ENCODE measurements at regions of chr13 and their contacts with region 1.

Region 1: GRCh38 chr13:49443704-49444523 is at the starts of genes CAB39L and SETDB2:
- DNase-seq: peak; percentile 97 to 100 (median 99)
- ATAC-seq: peak; percentile 89
- H3K4me3 ChIP-seq: peak within 1 kb of the TSS; percentile 72 to 76
- H3K4me3 Mint-ChIP-seq: peak within 1 kb of the TSS; percentile 93
- H3K27ac ChIP-seq: peak within 1 kb of the TSS; percentile 91 to 93
- H3K27ac Mint-ChIP-seq: peak within 1 kb of the TSS; percentile 98
- H3K4me1 ChIP-seq: peaks cover 42% of the 10 kb centered on the region
- H3K4me1 Mint-ChIP-seq: peaks cover 51% of the 10 kb centered on the region
- H3K27me3 ChIP-seq: no peaks in the 10 kb centered on the region
- H3K27me3 Mint-ChIP-seq: peaks cover 2% of the 10 kb centered on the region
- CTCF ChIP-seq: no peak
- total RNA-seq, gene CAB39L: 1.6 to 2.1 TPM
- total RNA-seq, gene SETDB2: 8.4 to 9.3 TPM

Region 2: GRCh38 chr13:48303359-48304142 is 1140.4 kb before region 1 on chr13 and contains the start of gene RB1:
- CTCF ChIA-PET with region 1: no interaction called
- POLR2A ChIA-PET with region 1: no interaction called
- intact Hi-C with region 1: loop called in 1 of 2 experiments (anchors 5 kb)
- DNase-seq: peak; percentile 81 to 97 (median 90)
- ATAC-seq: peak; percentile 79
- H3K4me3 ChIP-seq: peak within 1 kb of the TSS; percentile 83 to 95
- H3K4me3 Mint-ChIP-seq: peak within 1 kb of the TSS; percentile 98
- H3K27ac ChIP-seq: peak within 1 kb of the TSS; percentile 97 to 99
- H3K27ac Mint-ChIP-seq: peak within 1 kb of the TSS; percentile 97
- H3K4me1 ChIP-seq: peaks cover 17% of the 10 kb centered on the region
- H3K4me1 Mint-ChIP-seq: peaks cover 39% of the 10 kb centered on the region
- H3K27me3 ChIP-seq: no peaks in the 10 kb centered on the region
- H3K27me3 Mint-ChIP-seq: no peaks in the 10 kb centered on the region
- CTCF ChIP-seq: no peak
- total RNA-seq, gene RB1: 11.5 to 12.5 TPM

Region 3: DNA sequence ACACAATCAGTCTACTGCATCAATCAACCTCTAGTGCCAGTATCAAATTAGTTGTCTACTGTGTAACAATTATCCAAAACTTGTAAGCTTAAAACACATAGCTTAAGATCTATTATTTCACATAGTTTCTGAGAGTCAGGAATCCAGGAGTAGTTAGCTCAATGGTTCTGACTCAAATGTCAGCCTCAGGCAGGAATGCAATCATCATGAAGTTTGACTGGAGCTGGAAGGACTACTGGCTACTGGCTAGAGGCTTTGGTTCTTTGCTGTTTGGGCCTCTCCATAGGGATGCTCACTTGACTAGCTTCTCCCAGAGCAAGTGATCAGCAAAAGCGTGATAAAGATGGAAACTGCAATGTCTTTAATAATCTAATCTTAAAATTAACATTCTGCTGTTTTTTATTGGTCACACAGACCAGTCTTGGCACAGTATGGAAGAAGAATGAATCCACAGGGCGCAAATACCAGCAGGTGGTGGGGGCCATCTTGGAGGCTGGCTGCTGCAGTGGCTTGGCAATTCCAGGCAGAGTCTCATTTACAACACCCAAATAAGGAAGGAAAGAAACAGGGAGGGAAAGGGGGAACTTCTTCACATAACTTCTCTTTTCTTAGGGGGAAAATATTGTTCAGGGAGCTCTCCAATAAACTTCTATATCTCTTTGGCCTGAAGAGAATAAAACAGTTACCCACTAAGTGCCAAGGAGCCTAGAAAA is 15.7 kb before region 1 on chr13:
- CTCF ChIA-PET with region 1: no interaction called
- POLR2A ChIA-PET with region 1: interaction called, 14 read pairs
- intact Hi-C with region 1: no loop called
- DNase-seq: no peak
- ATAC-seq: no peak
- H3K4me3 ChIP-seq: no peak overlapping the region
- H3K4me3 Mint-ChIP-seq: no peak overlapping the region
- H3K27ac ChIP-seq: no peak overlapping the region
- H3K27ac Mint-ChIP-seq: no peak overlapping the region
- H3K4me1 ChIP-seq: no peaks in the 10 kb centered on the region
- H3K4me1 Mint-ChIP-seq: no peaks in the 10 kb centered on the region
- H3K27me3 ChIP-seq: no peaks in the 10 kb centered on the region
- H3K27me3 Mint-ChIP-seq: no peaks in the 10 kb centered on the region
- CTCF ChIP-seq: no peak

Region 4: DNA sequence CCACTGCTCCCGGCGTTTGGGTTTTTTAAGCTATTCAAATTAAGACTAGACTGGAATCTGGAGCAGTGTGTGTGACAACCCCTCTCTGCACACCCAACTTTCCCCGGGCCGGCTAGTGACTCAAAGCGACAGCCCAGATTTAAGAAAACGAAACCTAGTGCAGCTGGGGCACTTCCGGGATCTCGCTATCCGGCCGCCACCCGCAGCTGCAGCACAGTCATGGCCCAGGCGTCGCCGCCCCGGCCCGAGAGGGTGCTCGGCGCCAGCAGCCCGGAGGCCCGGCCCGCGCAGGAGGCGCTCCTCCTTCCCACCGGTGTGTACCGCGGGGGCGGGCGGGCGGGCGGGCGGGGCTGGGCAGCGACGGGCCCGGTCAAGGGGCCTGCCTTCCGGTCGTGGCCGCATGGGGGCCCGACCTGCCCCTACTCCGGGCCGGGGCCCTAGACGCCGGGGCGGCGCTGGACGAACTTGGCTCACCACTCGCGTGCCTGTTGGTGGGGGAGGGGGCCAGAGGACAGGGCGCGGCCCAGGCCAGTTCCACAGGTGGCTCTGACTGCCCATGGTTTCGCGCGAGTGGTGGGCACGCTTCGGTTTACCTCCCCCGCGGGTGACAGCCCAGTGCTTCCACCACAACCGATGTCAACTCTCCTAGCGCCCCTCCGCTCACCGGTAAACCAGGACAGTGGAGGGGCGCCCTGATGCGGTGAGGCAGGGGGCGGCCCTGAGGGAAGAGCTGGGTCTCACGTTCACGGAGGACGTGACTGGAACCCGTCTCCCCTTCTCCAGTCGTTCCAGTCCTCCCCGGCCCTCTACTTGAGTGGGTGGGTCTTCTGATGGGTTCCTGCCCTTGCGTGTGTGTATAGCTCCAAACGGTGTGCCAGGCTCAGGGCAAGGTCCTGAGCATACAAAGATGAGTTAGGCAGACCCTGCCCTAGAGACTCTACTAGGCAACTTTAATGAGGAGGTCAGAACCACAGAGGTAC is 52.2 kb after region 1 on chr13 and contains the start of gene PHF11:
- CTCF ChIA-PET with region 1: interaction called, 5 read pairs
- POLR2A ChIA-PET with region 1: interaction called, 86 read pairs
- intact Hi-C with region 1: loop called (anchors 1 kb)
- DNase-seq: peak; percentile 67 to 94 (median 87)
- ATAC-seq: peak; percentile 80
- H3K4me3 ChIP-seq: peak within 1 kb of the TSS; percentile 68 to 88
- H3K4me3 Mint-ChIP-seq: peak within 1 kb of the TSS; percentile 96
- H3K27ac ChIP-seq: peak within 1 kb of the TSS; percentile 90 to 96
- H3K27ac Mint-ChIP-seq: peak within 1 kb of the TSS; percentile 99
- H3K4me1 ChIP-seq: peaks cover 20% of the 10 kb centered on the region
- H3K4me1 Mint-ChIP-seq: peaks cover 47% of the 10 kb centered on the region
- H3K27me3 ChIP-seq: no peaks in the 10 kb centered on the region
- H3K27me3 Mint-ChIP-seq: no peaks in the 10 kb centered on the region
- CTCF ChIP-seq: no peak
- total RNA-seq, gene PHF11: 93.9 to 98.3 TPM

Region 5: GRCh38 chr13:49690992-49691886 is 247.3 kb after region 1 on chr13 and contains the start of gene EBPL:
- CTCF ChIA-PET with region 1: no interaction called
- POLR2A ChIA-PET with region 1: interaction called, 3 read pairs
- intact Hi-C with region 1: loop called in 1 of 2 experiments (anchors 1 kb)
- DNase-seq: peak; percentile 65 to 91 (median 88)
- ATAC-seq: peak; percentile 96
- H3K4me3 ChIP-seq: peak within 1 kb of the TSS; percentile 89
- H3K4me3 Mint-ChIP-seq: peak within 1 kb of the TSS; percentile 91
- H3K27ac ChIP-seq: peak within 1 kb of the TSS; percentile 41 to 47
- H3K27ac Mint-ChIP-seq: peak within 1 kb of the TSS; percentile 62
- H3K4me1 ChIP-seq: peaks cover 15% of the 10 kb centered on the region
- H3K4me1 Mint-ChIP-seq: peaks cover 23% of the 10 kb centered on the region
- H3K27me3 ChIP-seq: no peaks in the 10 kb centered on the region
- H3K27me3 Mint-ChIP-seq: no peaks in the 10 kb centered on the region
- CTCF ChIP-seq: peak; percentile 15
- total RNA-seq, gene EBPL: 9.5 to 10.7 TPM

Region 6: DNA sequence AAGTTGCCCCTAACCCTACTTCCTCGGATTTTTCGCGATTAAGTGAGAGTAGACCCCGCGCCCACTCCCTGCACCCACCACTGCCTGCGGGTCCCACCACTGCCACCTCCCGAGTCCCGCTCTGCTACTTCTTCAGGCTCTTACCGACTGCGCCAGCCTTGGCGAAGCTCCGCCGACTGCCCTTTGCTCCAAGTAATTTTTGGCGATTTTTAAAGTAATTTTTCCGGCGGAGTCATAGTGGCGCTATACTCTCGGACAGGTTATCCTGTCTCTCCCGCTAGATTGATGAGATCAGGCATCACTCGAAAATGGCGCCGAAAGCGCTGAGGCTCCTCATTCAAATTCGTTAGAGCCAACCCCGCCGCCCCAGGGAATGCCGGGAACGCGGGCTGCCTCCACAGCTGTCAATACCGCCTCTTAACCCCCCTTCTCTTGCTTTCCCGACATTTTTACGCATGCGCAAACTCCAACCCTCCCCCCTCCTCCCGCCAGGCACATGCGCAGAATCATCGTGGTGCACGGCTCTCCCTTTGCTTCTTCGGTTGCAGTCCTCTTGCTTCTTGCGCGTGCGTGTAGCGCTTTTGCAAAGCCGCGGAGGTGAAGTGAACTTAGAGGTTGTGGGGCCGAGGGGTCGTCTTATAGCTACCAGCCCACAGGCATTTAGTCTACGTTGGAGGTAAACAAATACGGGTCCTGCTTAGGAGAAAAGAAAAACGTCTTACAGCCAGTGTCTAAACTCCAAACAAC is 637.9 kb after region 1 on chr13:
- CTCF ChIA-PET with region 1: no interaction called
- POLR2A ChIA-PET with region 1: no interaction called
- intact Hi-C with region 1: loop called (anchors 5 kb)
- DNase-seq: peak; percentile 97 to 99 (median 98)
- ATAC-seq: peak; percentile 69
- H3K4me3 ChIP-seq: peak overlapping the region; percentile 79
- H3K4me3 Mint-ChIP-seq: peak overlapping the region; percentile 95
- H3K27ac ChIP-seq: peak overlapping the region; percentile 61 to 85
- H3K27ac Mint-ChIP-seq: peak overlapping the region; percentile 95
- H3K4me1 ChIP-seq: peaks cover 29% of the 10 kb centered on the region
- H3K4me1 Mint-ChIP-seq: peaks cover 43% of the 10 kb centered on the region
- H3K27me3 ChIP-seq: peaks cover under 1 to 29% of the 10 kb centered on the region in 2 experiments
- H3K27me3 Mint-ChIP-seq: peaks cover 15% of the 10 kb centered on the region
- CTCF ChIP-seq: no peak